Pancreas (tissue), 10 donors: ENCODE measurements at regions of chr7 and their contacts with region 1.

Region 1: GRCh38 chr7:117759950-117760640 is 113.1 kb downstream of the CTTNBP2 start:
- DNase-seq: no peak
- ATAC-seq: no peak
- H3K4me3 ChIP-seq: no peak overlapping the region
- H3K27ac ChIP-seq: no peak overlapping the region
- H3K4me1 ChIP-seq: no peaks in the 10 kb centered on the region
- H3K27me3 ChIP-seq: no peaks in the 10 kb centered on the region
- CTCF ChIP-seq: no peak

Region 2: DNA sequence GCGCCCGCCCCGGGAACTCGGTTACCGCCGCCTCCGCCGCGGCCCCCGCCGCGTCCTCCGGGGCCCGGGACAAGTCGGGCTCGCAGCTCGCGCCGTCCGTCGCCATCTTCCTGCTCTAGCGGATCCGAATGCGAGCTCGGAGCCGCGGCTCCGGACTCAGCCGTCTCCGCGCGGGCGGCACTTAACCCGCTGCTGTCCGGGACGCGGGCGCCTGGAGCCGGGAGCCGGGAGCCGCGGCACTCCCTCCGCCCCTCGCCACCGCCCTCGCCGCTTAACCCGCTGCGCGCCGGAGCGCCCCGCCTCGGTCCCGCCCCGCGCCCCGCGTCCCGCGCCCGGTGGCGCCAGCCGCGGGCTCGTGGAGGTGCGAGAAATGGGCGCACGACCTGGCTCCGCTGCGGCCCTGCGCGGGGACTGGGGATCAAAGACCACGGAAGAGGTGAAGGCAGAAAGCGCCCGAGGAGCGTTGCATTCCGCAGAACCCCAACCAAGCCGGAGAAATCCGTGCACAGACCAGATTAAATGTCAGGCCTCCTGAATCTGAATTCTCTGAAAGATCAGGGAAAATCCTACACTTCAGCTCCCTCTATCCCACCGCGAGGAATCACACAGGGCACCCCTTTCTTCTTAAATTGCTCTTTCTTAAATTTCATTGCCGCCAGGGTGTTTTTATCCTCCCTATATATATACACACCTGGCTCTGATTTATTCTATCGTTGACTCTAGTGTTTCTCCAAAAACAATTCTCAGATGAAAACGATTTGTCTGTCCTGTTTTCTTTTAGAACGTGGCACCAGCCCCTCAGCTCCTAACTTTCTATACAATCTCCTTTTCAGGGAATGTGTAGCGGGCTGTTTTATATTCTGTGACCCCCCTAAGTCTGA is 113.5 kb after region 1 on chr7 and contains the start of gene CTTNBP2:
- intact Hi-C with region 1: loop called in 1 of 3 experiments (anchors 10 kb)
- DNase-seq: peak in 5 of 6 donors; percentile 37 to 83 (median 55)
- ATAC-seq: peak; percentile 76 to 87 (median 80)
- H3K4me3 ChIP-seq: peak within 1 kb of the TSS; percentile 72 to 92 (median 86)
- H3K27ac ChIP-seq: peak within 1 kb of the TSS; percentile 12 to 76 (median 58)
- H3K4me1 ChIP-seq: peaks cover 0 to 4% (median 3%) of the 10 kb centered on the region in 3 donors
- H3K27me3 ChIP-seq: no peaks in the 10 kb centered on the region
- CTCF ChIP-seq: no peak
- total RNA-seq, gene CTTNBP2: 7.7 to 15.4 (median 10.8) TPM